Dendritic cell treated with granulocyte-macrophage colony-stimulating factor and Interleukin-4, amounts not matched to agents 40 ng/mL and 50 ng/mL, for 4 days (primary cell): ENCODE measurements at regions of chr7 and their contacts with region 1.

Region 1: GRCh38 chr7:2519119-2519930 is at the start of gene LFNG:
- H3K4me3 Mint-ChIP-seq: peak within 1 kb of the TSS; percentile 100
- H3K27ac Mint-ChIP-seq: peak within 1 kb of the TSS; percentile 87
- H3K4me1 Mint-ChIP-seq: peaks cover 54% of the 10 kb centered on the region
- H3K27me3 Mint-ChIP-seq: peaks cover 8% of the 10 kb centered on the region

Region 2: DNA sequence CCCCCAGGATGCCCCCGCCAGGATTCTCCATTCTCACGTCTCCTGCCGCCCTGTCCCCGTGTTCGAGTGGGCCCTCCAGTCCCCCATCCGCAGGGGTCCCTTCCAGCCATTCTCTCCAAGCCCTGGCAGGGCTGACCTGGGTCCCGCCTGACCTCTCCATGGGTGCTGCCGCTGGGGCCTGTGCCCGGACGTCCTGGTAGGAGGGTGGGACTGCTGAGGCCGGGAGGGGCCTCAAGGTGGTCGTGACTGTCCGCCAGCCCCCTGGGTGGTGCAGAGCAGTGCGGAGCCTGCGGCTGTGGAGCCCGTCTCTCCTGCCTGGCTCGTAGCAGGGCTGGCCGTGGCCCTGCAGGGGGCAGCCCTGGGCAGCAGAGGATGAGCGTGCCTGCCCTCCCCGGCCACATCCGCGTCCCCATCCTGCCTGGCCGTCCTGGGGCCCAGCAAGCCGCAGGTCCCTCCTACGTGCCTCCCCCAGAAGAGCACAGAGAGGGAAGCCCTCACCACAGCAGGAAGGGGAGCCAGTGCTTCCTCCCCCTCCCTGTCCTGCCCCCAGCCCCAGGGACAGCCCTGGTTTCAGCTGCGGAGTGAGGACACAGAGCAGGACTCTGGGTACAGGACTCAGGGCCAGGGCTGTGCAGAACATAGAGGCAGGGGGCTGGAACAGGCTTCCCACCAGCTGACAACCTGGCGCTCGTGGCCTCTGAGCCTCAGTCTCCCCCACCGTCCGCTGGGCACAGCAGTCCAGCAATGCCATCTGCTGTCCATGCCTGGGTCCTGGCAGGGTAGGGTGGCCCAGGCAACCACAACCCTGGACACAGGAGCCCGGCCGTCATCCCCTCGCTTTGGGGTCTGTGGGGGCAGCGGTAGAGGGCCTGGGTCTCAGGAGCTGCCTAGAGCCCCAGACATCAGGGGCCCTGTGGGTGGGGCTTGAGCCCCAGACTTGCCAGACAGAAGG is 41.6 kb before region 1 on chr7:
- intact Hi-C with region 1: loop called (anchors 5 kb)
- H3K4me3 Mint-ChIP-seq: no peak overlapping the region
- H3K27ac Mint-ChIP-seq: peak overlapping the region; percentile 45
- H3K4me1 Mint-ChIP-seq: peaks cover 19% of the 10 kb centered on the region
- H3K27me3 Mint-ChIP-seq: peaks cover 53% of the 10 kb centered on the region